ENCODE measurements at regions of chr4 and their contacts with region 1.

Region 1: DNA sequence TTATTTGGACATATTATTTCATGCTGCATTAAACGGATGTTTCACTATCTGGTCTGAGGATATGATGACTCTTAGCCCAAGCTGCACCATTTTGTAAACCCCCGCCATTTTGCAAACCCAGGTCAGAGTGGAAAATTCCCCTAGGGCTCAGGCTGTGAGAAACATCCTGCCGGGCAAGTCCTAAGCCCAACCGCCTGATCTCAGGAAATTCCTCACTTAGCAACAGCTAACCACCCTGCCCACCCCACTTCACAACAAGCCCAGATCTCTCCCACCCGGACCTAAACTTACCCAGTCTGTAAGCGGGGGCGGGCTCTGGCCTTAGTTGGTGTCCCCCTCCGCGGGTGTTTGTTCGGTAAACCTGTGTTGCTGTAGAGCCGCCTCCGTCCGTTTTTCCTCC is 2747.1 kb downstream of the PCDH7 start:
- DNase-seq: no peak
- H3K4me3 ChIP-seq: no peak overlapping the region
- H3K27ac ChIP-seq: no peak overlapping the region
- H3K4me1 ChIP-seq: no peaks in the 10 kb centered on the region
- H3K27me3 ChIP-seq: no peaks in the 10 kb centered on the region
- CTCF ChIP-seq: no peak
- POLR2A ChIP-seq: no peak

Region 2: GRCh38 chr4:33448948-33449347 is 18.3 kb before region 1 on chr4:
- intact Hi-C with region 1: loop called (anchors 1 kb)
- DNase-seq: no peak
- H3K4me3 ChIP-seq: no peak overlapping the region
- H3K27ac ChIP-seq: no peak overlapping the region
- H3K4me1 ChIP-seq: no peaks in the 10 kb centered on the region
- H3K27me3 ChIP-seq: no peaks in the 10 kb centered on the region
- CTCF ChIP-seq: no peak
- POLR2A ChIP-seq: no peak

Region 3: DNA sequence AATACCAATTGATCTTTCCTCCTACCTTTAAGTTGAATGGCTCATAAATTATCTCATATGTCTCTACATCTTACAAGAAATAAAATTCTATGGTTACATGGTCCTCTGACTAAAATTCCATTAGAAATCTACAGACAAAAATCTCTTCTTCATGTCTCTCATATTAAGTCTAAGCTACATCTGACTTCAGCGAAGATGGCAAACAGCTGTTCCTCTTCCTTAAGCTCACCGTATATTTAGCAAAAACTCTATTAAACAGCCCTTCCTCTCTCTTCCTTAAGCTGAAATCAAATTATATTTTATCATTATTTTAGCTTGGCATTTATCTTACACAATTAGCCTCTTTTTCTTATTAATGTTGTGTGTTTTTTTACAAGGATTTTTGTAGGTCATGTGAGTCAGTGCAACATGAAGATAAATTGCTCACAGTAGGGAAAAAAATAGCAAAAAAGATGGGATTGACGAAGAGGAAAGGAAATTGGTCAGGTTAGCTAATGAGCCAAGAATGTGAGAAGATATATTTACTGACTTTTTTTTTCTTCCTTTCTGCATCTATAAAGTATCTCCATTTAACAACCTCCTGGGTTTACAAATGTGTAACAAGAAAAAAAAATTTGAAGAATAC is 364.3 kb after region 1 on chr4:
- intact Hi-C with region 1: no loop called
- DNase-seq: no peak
- H3K4me3 ChIP-seq: no peak overlapping the region
- H3K27ac ChIP-seq: no peak overlapping the region
- H3K4me1 ChIP-seq: no peaks in the 10 kb centered on the region
- H3K27me3 ChIP-seq: no peaks in the 10 kb centered on the region
- CTCF ChIP-seq: no peak
- POLR2A ChIP-seq: no peak